ENCODE measurements at regions of chr12 and their contacts with region 1.

Region 1: GRCh38 chr12:17866802-17867201 is 223.2 kb downstream of the RERGL start:
- DNase-seq: no peak
- H3K4me3 ChIP-seq: no peak overlapping the region
- H3K27ac ChIP-seq: no peak overlapping the region
- H3K4me1 ChIP-seq: no peaks in the 10 kb centered on the region
- H3K27me3 ChIP-seq: no peaks in the 10 kb centered on the region
- CTCF ChIP-seq: no peak

Region 2: DNA sequence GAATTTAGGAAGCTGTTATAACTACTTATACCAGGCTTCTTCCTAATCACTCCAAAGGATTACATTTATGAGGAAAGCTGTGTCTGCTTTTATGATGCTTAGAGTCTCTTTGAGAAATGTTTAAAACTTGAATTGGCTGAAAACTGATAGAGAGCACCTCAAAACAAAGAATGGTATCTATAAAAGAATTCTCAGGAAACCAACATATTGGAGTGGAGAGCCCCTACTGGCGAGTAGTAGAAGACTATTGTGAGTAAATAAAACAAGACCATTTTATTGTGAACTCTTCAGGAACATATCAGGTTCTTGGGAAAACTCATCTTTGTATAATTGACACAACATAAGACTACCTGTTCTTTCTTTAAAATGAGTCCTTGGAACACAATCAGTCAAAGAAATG is 355.4 kb before region 1 on chr12:
- CTCF ChIA-PET with region 1: no interaction called
- POLR2A ChIA-PET with region 1: no interaction called
- intact Hi-C with region 1: no loop called
- DNase-seq: peak; percentile 24
- H3K4me3 ChIP-seq: no peak overlapping the region
- H3K27ac ChIP-seq: no peak overlapping the region
- H3K4me1 ChIP-seq: no peaks in the 10 kb centered on the region
- H3K27me3 ChIP-seq: no peaks in the 10 kb centered on the region
- CTCF ChIP-seq: peak; percentile 46

Region 3: DNA sequence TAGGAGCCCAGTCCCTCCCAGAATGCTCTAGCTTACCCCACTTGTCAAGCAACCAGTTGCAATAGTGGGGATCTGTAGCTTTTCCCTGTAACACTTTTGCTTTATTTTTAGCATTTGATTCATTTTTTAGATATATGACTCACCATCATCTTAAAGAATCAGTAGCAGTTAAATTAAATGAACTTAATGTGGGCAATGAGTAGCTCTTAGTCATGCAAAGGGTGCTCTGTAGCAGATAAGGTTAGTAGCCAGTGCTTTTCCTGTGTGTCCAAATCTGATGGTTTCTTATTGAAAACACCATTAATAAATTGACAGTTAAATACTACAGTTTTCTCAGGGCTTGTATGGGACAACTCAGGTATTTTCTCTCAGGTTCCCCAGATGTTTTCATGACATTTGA is 88.6 kb before region 1 on chr12:
- CTCF ChIA-PET with region 1: no interaction called
- POLR2A ChIA-PET with region 1: no interaction called
- intact Hi-C with region 1: loop called (anchors 2 kb)
- DNase-seq: no peak
- H3K4me3 ChIP-seq: no peak overlapping the region
- H3K27ac ChIP-seq: no peak overlapping the region
- H3K4me1 ChIP-seq: no peaks in the 10 kb centered on the region
- H3K27me3 ChIP-seq: no peaks in the 10 kb centered on the region
- CTCF ChIP-seq: no peak